CD8-positive, alpha-beta T cell (primary cell): ENCODE measurements at regions of chr12 and their contacts with region 1.

Region 1: GRCh38 chr12:54368709-54369583 is 4.7 kb upstream of the GPR84 start:
- DNase-seq: peak; percentile 79 to 94 (median 88)
- ATAC-seq: peak; percentile 97
- H3K4me3 ChIP-seq: peak overlapping the region in 1 of 2 experiments; percentile 15
- H3K4me3 Mint-ChIP-seq: peak overlapping the region; percentile 60
- H3K27ac ChIP-seq: peak overlapping the region in 1 of 2 experiments; percentile 28
- H3K27ac Mint-ChIP-seq: no peak overlapping the region
- H3K4me1 ChIP-seq: peaks cover 30% of the 10 kb centered on the region
- H3K4me1 Mint-ChIP-seq: peaks cover 34% of the 10 kb centered on the region
- H3K27me3 ChIP-seq: no peaks in the 10 kb centered on the region
- H3K27me3 Mint-ChIP-seq: no peaks in the 10 kb centered on the region
- CTCF ChIP-seq: peak; percentile 80

Region 2: GRCh38 chr12:54005853-54006686 is 362.9 kb before region 1 on chr12:
- CTCF ChIA-PET with region 1: no interaction called
- POLR2A ChIA-PET with region 1: no interaction called
- intact Hi-C with region 1: loop called in 1 of 2 experiments (anchors 10 kb)
- DNase-seq: peak; percentile 71 to 92 (median 86)
- ATAC-seq: peak; percentile 80
- H3K4me3 ChIP-seq: peak overlapping the region; percentile 24 to 62
- H3K4me3 Mint-ChIP-seq: peak overlapping the region; percentile 82
- H3K27ac ChIP-seq: no peak overlapping the region
- H3K27ac Mint-ChIP-seq: no peak overlapping the region
- H3K4me1 ChIP-seq: peaks cover 22% of the 10 kb centered on the region
- H3K4me1 Mint-ChIP-seq: peaks cover 25% of the 10 kb centered on the region
- H3K27me3 ChIP-seq: peaks cover 72 to 85% of the 10 kb centered on the region in 2 experiments
- H3K27me3 Mint-ChIP-seq: peaks cover 87% of the 10 kb centered on the region
- CTCF ChIP-seq: peak; percentile 93

Region 3: GRCh38 chr12:54251667-54252284 is 117.2 kb before region 1 on chr12:
- CTCF ChIA-PET with region 1: interaction called, 35 read pairs
- POLR2A ChIA-PET with region 1: no interaction called
- intact Hi-C with region 1: loop called (anchors 1 kb)
- DNase-seq: peak in 3 of 9 experiments; percentile 11 to 71 (median 60)
- ATAC-seq: peak; percentile 79
- H3K4me3 ChIP-seq: no peak overlapping the region
- H3K4me3 Mint-ChIP-seq: no peak overlapping the region
- H3K27ac ChIP-seq: no peak overlapping the region
- H3K27ac Mint-ChIP-seq: no peak overlapping the region
- H3K4me1 ChIP-seq: no peaks in the 10 kb centered on the region
- H3K4me1 Mint-ChIP-seq: peaks cover 11% of the 10 kb centered on the region
- H3K27me3 ChIP-seq: no peaks in the 10 kb centered on the region
- H3K27me3 Mint-ChIP-seq: no peaks in the 10 kb centered on the region
- CTCF ChIP-seq: peak; percentile 87

Region 4: GRCh38 chr12:54324617-54325441 is 44.1 kb before region 1 on chr12 and contains the start of gene COPZ1:
- CTCF ChIA-PET with region 1: interaction called, 6 read pairs
- POLR2A ChIA-PET with region 1: interaction called, 3 read pairs
- intact Hi-C with region 1: loop called in 1 of 2 experiments (anchors 2 kb)
- DNase-seq: peak; percentile 87 to 98 (median 91)
- ATAC-seq: peak; percentile 95
- H3K4me3 ChIP-seq: peak within 1 kb of the TSS; percentile 62 to 81
- H3K4me3 Mint-ChIP-seq: peak within 1 kb of the TSS; percentile 97
- H3K27ac ChIP-seq: peak within 1 kb of the TSS; percentile 79 to 82
- H3K27ac Mint-ChIP-seq: peak within 1 kb of the TSS; percentile 98
- H3K4me1 ChIP-seq: peaks cover 19% of the 10 kb centered on the region
- H3K4me1 Mint-ChIP-seq: peaks cover 36% of the 10 kb centered on the region
- H3K27me3 ChIP-seq: no peaks in the 10 kb centered on the region
- H3K27me3 Mint-ChIP-seq: no peaks in the 10 kb centered on the region
- CTCF ChIP-seq: peak; percentile 82
- total RNA-seq, gene COPZ1: 24.1 to 25.2 TPM

Region 5: DNA sequence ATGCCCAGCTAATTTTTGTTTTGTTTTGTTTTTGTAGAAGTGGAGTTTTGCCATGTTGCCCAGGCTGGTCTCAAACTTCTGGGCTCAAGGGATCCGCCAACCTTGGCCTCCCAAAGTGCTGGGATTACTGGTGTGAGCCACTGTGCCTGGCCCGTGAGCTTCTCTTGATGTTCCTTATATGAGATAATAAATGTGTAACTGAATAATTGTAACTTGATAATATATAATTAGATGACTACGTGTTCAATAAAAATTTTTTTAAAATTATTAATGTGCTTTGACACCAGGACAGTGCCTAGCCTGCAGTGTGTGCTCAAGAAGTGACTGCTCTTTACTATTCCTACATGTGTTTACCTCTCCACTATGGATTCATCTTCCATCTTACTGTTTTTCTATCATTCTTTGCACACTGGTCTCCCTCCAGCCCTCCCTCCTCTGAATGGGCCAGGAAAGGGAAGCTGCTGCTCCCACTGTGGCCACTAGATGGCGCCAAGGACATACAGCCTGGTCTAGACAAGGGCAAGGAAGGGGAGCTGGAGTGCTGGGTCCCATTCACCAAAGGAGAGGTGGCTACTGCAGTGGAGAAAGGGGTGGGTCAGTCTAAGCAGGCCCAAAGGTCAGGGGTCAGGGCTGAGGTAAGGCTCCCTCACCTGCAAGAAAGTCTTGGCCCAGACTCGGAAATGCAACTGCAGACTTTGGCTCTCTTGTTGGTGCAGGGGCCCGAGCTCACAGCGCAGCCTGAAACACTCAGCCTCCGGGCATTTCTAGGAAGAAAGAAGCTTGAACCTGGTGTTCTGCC is 30.2 kb after region 1 on chr12:
- CTCF ChIA-PET with region 1: interaction called, 13 read pairs
- POLR2A ChIA-PET with region 1: no interaction called
- intact Hi-C with region 1: no loop called
- DNase-seq: peak; percentile 82 to 96 (median 88)
- ATAC-seq: peak; percentile 98
- H3K4me3 ChIP-seq: no peak overlapping the region
- H3K4me3 Mint-ChIP-seq: no peak overlapping the region
- H3K27ac ChIP-seq: no peak overlapping the region
- H3K27ac Mint-ChIP-seq: peak overlapping the region; percentile 21
- H3K4me1 ChIP-seq: peaks cover 3% of the 10 kb centered on the region
- H3K4me1 Mint-ChIP-seq: peaks cover 8% of the 10 kb centered on the region
- H3K27me3 ChIP-seq: no peaks in the 10 kb centered on the region
- H3K27me3 Mint-ChIP-seq: no peaks in the 10 kb centered on the region
- CTCF ChIP-seq: peak; percentile 95